ENCODE measurements at regions of chr3 and their contacts with region 1.

Region 1: GRCh38 chr3:57221883-57222282 is 5.6 kb upstream of the APPL1 start:
- DNase-seq: no peak

Region 2: DNA sequence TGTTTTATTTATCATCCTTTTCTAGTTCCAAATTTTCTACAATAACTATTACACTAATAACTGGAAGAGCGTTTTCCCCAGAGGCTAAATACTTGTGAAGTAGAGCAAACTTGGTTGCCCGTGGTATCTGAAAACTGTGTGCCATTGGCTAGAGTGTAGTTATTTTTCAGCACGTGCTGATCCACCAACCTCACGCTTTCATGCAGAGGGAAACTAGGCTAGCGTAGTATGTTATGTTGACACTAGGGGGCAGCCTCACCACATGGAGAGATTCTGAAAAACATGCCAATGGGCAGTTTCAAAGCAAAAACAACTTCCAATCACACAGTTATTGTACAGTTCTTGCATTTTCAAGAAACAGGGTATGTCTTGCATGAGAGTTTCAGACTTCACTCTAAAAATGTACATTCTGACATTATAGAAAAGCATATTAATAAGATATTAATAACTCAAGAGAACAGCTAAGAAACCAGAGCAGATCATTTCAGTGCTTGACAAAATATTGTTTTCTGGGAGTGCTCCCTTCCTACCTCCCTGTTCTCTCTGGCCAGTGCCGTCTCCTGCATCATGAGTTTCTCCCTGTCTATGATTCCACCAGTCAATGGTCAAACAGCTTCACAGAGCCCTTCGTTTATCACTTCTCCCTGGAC is 121.7 kb before region 1 on chr3:
- intact Hi-C with region 1: loop called (anchors 5 kb)
- DNase-seq: peak in 8 of 10 donors; percentile 43 to 91 (median 76)